ENCODE measurements at regions of chr10 and their contacts with region 1.

Region 1: GRCh38 chr10:5184987-5185775 is at the start of gene AKR1C8:
- DNase-seq: no peak
- H3K4me3 ChIP-seq: no peak within 1 kb of the TSS
- H3K27ac ChIP-seq: no peak within 1 kb of the TSS
- H3K4me1 ChIP-seq: no peaks in the 10 kb centered on the region
- H3K27me3 ChIP-seq: no peaks in the 10 kb centered on the region
- CTCF ChIP-seq: no peak
- EP300 ChIP-seq: no peak
- POLR2A ChIP-seq: no peak
- total RNA-seq, gene AKR1C8: 1.4 TPM in 1 of 4 donors, not detected in the others

Region 2: GRCh38 chr10:5125315-5126044 is 59.7 kb before region 1 on chr10:
- in situ Hi-C with region 1: no loop called
- intact Hi-C with region 1: loop called (anchors 2 kb)
- DNase-seq: no peak
- H3K4me3 ChIP-seq: no peak overlapping the region
- H3K27ac ChIP-seq: no peak overlapping the region
- H3K4me1 ChIP-seq: no peaks in the 10 kb centered on the region
- H3K27me3 ChIP-seq: no peaks in the 10 kb centered on the region
- CTCF ChIP-seq: no peak
- EP300 ChIP-seq: no peak
- POLR2A ChIP-seq: no peak

Measured in transverse colon (tissue), 4 donors.